ENCODE measurements at regions of chr14 and their contacts with region 1.

Region 1: GRCh38 chr14:64294672-64295413 is 672 bp upstream of the ESR2 start:
- ATAC-seq: peak; percentile 53 to 97 (median 63)
- H3K4me3 ChIP-seq: peak overlapping the region in 1 of 5 donors; percentile 25
- H3K27ac ChIP-seq: no peak overlapping the region
- H3K4me1 ChIP-seq: peaks cover 0 to 3% of the 10 kb centered on the region in 2 donors

Region 2: DNA sequence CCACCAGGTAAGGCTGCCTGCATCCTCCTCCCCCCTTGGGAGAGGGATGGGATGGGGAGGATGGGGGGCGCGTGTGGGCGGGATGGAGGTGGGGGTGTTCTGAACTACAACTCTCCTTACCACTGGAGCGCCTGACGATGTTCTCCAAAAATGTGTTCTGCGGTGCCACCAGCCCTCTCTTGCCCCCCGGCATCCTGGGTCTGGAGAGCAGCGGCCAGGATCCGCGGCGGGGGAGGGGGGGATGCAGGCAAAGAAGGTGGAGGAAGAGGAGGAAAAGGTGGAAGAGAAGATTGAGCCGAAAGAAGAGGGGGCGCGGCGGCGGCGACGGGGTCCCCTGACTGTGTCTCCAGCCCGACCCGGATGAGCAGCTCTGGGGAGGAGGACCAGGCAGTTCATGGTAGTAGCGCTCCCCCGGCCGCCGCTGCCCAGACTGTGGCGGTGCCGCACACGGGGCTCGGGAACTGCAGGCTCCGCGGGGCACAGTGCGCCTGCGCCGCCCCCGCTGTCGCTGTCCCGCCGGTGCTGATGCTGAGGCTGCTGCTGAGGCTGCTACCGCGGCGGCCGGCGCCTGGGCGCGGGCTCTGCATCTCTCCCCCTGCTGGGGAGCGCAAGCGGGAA is 1249.7 kb before region 1 on chr14 and contains the start of gene KCNH5:
- in situ Hi-C with region 1: no loop called
- ATAC-seq: peak; percentile 28 to 93 (median 92)
- H3K4me3 ChIP-seq: peak within 1 kb of the TSS; percentile 54 to 86 (median 56)
- H3K27ac ChIP-seq: peak within 1 kb of the TSS; percentile 2
- H3K4me1 ChIP-seq: peaks cover 0 to 2% of the 10 kb centered on the region in 2 donors
- total RNA-seq, gene KCNH5: 0.10 to 2.1 (median 0.43) TPM in 7 of 8 experiments, not detected in the other

Region 3: GRCh38 chr14:63795532-63795931 is 499.3 kb before region 1 on chr14:
- in situ Hi-C with region 1: loop called in 3 of 9 experiments (anchors 10 kb)
- ATAC-seq: no peak
- H3K4me3 ChIP-seq: no peak overlapping the region
- H3K27ac ChIP-seq: no peak overlapping the region
- H3K4me1 ChIP-seq: no peaks in the 10 kb centered on the region

Region 4: GRCh38 chr14:64040044-64040443 is 254.8 kb before region 1 on chr14:
- in situ Hi-C with region 1: loop called in 1 of 9 experiments (anchors 25 kb)
- ATAC-seq: no peak
- H3K4me3 ChIP-seq: no peak overlapping the region
- H3K27ac ChIP-seq: no peak overlapping the region
- H3K4me1 ChIP-seq: peaks cover 2 to 5% of the 10 kb centered on the region in 2 donors

Region 5: GRCh38 chr14:64159588-64159987 is 135.3 kb before region 1 on chr14:
- in situ Hi-C with region 1: no loop called
- ATAC-seq: no peak
- H3K4me3 ChIP-seq: no peak overlapping the region
- H3K27ac ChIP-seq: no peak overlapping the region
- H3K4me1 ChIP-seq: no peaks in the 10 kb centered on the region

Measured in motor neuron (in vitro differentiated cells).